ENCODE measurements at regions of chr9 and their contacts with region 1.

Region 1: DNA sequence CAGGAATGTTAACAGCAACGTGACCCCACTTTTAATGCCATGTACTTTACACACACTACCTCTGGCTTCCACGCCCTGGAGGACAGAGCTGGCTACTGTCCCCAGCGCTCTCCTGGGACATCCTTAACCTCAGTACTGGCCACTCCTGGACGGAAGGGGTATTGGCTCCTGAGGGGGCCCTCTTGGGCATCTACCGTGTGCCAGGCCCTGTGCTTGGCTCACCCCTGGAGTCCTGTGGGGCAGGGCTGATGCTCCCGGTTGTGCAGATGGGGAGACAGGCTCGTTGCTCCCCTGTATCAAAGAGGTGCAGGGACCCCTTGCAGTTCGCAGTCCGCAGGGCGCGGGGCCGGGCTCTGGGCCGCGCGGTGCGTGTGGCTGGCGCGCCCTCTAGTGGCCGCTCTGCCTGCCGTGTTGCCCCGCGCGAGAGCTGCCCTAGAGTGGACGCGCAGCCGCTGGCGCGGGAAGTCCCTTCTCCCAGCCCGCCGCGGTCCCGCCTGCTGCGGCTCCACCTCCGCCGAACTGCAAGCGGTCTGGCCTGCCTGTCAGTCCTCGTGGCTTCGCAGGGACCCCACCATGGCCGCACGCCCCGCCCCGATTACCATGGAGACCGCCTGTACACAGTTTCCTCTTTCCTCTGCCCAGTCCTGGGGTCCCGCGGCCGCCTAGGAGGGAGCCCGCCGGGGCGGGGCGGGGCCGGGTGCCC is at the start of gene WDR38:
- DNase-seq: peak; percentile 55 to 86 (median 76)
- ATAC-seq: peak; percentile 95
- H3K4me3 ChIP-seq: peak within 1 kb of the TSS; percentile 50
- H3K4me3 Mint-ChIP-seq: peak within 1 kb of the TSS in 9 of 10 donors; percentile 64 to 79 (median 68)
- H3K27ac ChIP-seq: peak within 1 kb of the TSS; percentile 46
- H3K27ac Mint-ChIP-seq: peak within 1 kb of the TSS in 3 of 9 donors; percentile 9 to 23 (median 19)
- H3K4me1 ChIP-seq: peaks cover 8% of the 10 kb centered on the region in 2 donors
- H3K4me1 Mint-ChIP-seq: peaks cover 4 to 14% (median 6%) of the 10 kb centered on the region in 7 donors
- H3K27me3 ChIP-seq: no peaks in the 10 kb centered on the region
- H3K27me3 Mint-ChIP-seq: peaks cover 5 to 16% (median 9%) of the 10 kb centered on the region in 5 donors
- total RNA-seq, gene WDR38: not detected

Region 2: DNA sequence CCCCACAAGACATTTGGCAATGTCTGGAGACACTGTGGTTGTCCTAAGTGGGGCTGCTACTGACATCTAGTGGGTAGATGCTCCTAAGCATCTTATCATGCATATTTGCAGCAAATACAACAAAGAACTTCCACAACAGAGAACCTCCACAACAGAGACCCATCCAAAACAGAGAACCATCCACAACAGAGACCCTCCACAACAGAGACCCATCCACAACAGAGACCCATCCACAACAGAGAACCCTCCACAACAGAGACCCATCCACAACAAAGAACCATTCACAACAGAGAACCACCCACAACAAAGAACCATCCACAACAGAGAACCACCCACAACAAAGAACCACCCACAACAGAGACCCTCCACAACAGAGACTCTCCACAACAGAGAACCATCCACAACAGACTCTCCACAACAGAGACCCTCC is 41.8 kb after region 1 on chr9:
- CTCF ChIA-PET with region 1: interaction called, 3 read pairs
- POLR2A ChIA-PET with region 1: interaction called, 3 read pairs
- intact Hi-C with region 1: loop called (anchors 1 to 2 kb)
- DNase-seq: peak in 7 of 9 donors; percentile 68 to 80 (median 75)
- ATAC-seq: peak; percentile 87
- H3K4me3 ChIP-seq: no peak overlapping the region
- H3K4me3 Mint-ChIP-seq: peak overlapping the region in 6 of 10 donors; percentile 1 to 88 (median 66)
- H3K27ac ChIP-seq: peak overlapping the region; percentile 30
- H3K27ac Mint-ChIP-seq: peak overlapping the region; percentile 5 to 98 (median 89)
- H3K4me1 ChIP-seq: peaks cover 0 to 4% of the 10 kb centered on the region in 2 donors
- H3K4me1 Mint-ChIP-seq: peaks cover 7 to 23% (median 18%) of the 10 kb centered on the region in 7 donors
- H3K27me3 ChIP-seq: no peaks in the 10 kb centered on the region
- H3K27me3 Mint-ChIP-seq: peaks cover 0 to 9% (median 0%) of the 10 kb centered on the region in 5 donors

Region 3: GRCh38 chr9:125374443-125375309 is 521.7 kb after region 1 on chr9:
- CTCF ChIA-PET with region 1: no interaction called
- POLR2A ChIA-PET with region 1: no interaction called
- intact Hi-C with region 1: loop called (anchors 5 kb)
- DNase-seq: peak; percentile 37 to 74 (median 64)
- ATAC-seq: peak; percentile 86
- H3K4me3 ChIP-seq: peak overlapping the region; percentile 46
- H3K4me3 Mint-ChIP-seq: peak overlapping the region in 8 of 10 donors; percentile 36 to 76 (median 64)
- H3K27ac ChIP-seq: no peak overlapping the region
- H3K27ac Mint-ChIP-seq: peak overlapping the region in 1 of 9 donors; percentile 55
- H3K4me1 ChIP-seq: peaks cover 0 to 9% of the 10 kb centered on the region in 2 donors
- H3K4me1 Mint-ChIP-seq: peaks cover 5 to 10% (median 6%) of the 10 kb centered on the region in 7 donors
- H3K27me3 ChIP-seq: no peaks in the 10 kb centered on the region
- H3K27me3 Mint-ChIP-seq: peaks cover 0 to 8% (median 2%) of the 10 kb centered on the region in 5 donors

Measured in naive thymus-derived CD4-positive, alpha-beta T cell (primary cell).